Activated naive CD4-positive, alpha-beta T cell treated with anti-CD3 and anti-CD28 coated beads for 36 hours (primary cell): ENCODE measurements at regions of chr7 and their contacts with region 1.

Region 1: DNA sequence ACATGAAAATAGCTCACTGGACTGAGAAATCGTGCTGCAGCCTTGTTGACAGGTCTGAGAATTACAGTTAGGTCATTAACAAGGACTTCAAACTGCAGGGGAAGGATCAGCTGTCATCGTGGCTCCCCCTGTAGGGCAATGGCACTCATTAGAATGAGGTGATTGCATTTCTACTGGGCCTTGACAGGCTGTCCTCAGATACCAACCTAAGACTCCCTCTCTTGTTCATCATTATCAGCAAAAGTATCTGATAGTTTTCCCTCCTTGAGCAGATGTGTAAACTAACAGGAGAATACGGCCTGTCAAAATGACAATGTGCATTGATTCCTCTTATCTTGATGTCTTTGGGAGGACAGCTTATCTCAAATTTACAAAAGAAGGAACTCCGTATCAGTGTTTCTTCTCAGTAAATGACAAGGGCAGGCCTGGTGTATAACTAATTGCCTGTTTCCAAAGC is 648.5 kb upstream of the LRRN3 start:
- DNase-seq: peak; percentile 46
- H3K4me3 Mint-ChIP-seq: no peak overlapping the region
- H3K27ac Mint-ChIP-seq: no peak overlapping the region
- H3K4me1 Mint-ChIP-seq: no peaks in the 10 kb centered on the region
- H3K27me3 Mint-ChIP-seq: no peaks in the 10 kb centered on the region

Region 2: GRCh38 chr7:109844362-109844761 is 598.0 kb before region 1 on chr7:
- CTCF ChIA-PET with region 1: interaction called, 3 read pairs
- intact Hi-C with region 1: loop called (anchors 2 kb)
- DNase-seq: peak; percentile 18
- H3K4me3 Mint-ChIP-seq: no peak overlapping the region
- H3K27ac Mint-ChIP-seq: no peak overlapping the region
- H3K4me1 Mint-ChIP-seq: no peaks in the 10 kb centered on the region
- H3K27me3 Mint-ChIP-seq: peaks cover 10% of the 10 kb centered on the region

Region 3: DNA sequence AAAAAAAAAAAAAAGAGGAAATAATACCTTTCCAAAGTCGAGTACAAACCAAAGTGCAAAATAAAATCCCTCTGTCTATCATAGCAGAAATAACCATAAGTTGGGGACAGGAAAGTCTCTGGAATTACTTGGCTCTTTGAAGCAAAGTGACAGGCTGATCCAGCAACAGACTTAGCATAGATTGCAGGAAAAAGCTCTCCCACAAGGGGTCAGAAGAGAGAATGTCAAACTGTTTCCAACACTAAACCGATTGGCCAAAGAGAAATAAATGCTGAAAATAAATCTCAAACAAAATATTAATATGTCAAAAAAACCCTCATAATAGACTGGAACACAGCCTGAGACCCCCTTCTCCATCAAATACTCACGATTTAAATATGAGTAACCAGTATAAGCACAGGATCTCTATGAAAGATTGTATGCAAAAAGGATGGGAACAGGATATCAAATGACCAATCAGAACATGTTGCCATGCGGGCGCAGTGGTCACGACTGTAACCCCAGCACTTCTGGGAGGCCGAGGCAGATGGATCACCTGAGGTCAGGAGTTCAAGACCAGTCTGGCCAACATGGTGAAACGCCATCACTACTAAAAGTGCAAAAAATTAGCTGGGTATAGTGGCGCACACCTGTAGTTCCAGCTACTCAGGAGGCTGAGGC is 352.2 kb before region 1 on chr7:
- CTCF ChIA-PET with region 1: no interaction called
- intact Hi-C with region 1: loop called (anchors 1 kb)
- DNase-seq: no peak
- H3K4me3 Mint-ChIP-seq: no peak overlapping the region
- H3K27ac Mint-ChIP-seq: no peak overlapping the region
- H3K4me1 Mint-ChIP-seq: no peaks in the 10 kb centered on the region
- H3K27me3 Mint-ChIP-seq: peaks cover 2% of the 10 kb centered on the region

Region 4: DNA sequence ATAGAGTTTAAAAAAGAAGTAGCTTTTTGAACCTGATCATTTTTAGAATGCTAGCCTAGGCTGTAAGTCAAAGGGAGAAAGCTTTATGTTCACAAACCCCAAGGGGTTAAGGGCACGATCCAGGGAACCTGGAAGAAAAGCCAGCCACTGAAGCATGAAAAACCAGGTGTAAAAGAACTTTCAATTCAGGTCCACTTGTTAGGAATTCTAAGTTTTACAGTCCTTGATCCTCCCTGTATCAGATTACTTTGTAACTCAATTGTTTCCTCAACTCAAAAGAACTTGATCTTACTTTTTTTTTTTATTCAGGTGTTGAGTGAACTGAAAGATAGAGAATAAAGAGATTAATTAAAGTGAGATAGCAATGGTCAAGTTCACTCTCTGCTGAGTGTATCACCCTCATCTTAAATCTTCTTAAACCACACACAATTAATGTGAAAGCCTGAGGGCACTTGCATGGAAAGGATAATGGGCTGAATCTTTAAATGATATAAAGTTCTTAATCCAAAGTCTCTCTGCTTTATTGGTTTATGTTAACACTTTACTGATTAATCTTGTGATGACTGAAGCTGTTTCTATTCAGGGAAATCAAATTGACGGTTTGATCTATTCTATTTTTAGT is 23.6 kb before region 1 on chr7:
- CTCF ChIA-PET with region 1: no interaction called
- intact Hi-C with region 1: no loop called
- DNase-seq: no peak
- H3K4me3 Mint-ChIP-seq: no peak overlapping the region
- H3K27ac Mint-ChIP-seq: no peak overlapping the region
- H3K4me1 Mint-ChIP-seq: no peaks in the 10 kb centered on the region
- H3K27me3 Mint-ChIP-seq: no peaks in the 10 kb centered on the region

Region 5: DNA sequence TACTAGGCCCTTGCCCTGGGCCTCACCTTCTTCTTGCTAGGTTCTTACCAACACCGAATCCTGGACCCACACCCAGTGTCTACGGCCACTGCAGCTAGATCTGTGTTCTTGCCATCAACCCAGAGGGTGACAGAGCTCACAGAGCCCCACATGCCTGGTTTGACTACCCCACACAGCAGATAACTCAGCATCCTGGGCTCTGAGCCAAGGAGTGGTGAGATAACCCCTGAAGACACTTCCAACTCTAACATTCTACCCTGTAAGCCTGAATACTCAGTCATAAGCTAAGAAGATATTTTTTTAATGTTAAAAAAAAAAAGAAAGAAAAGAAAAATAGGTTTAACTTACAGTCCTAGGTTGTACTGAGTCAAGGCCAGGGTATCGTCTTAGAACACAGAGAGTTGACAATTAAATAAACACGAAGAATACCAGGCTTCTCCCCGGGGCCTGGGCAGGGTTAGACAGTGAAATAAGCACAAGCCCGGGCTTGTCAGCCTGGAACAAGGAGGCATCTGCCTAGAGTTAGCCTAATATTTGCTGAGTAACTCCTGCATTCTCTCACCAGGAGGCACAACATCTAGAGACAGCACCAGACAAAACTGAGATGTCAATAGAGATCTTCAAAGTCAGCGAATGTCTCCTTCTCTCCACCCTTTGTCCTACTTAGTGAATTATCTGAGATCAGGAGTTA is 92.0 kb after region 1 on chr7:
- CTCF ChIA-PET with region 1: no interaction called
- intact Hi-C with region 1: no loop called
- DNase-seq: no peak
- H3K4me3 Mint-ChIP-seq: no peak overlapping the region
- H3K27ac Mint-ChIP-seq: no peak overlapping the region
- H3K4me1 Mint-ChIP-seq: no peaks in the 10 kb centered on the region
- H3K27me3 Mint-ChIP-seq: no peaks in the 10 kb centered on the region